Ovary (tissue), 10 donors: ENCODE measurements at regions of chr7 and their contacts with region 1.

Region 1: DNA sequence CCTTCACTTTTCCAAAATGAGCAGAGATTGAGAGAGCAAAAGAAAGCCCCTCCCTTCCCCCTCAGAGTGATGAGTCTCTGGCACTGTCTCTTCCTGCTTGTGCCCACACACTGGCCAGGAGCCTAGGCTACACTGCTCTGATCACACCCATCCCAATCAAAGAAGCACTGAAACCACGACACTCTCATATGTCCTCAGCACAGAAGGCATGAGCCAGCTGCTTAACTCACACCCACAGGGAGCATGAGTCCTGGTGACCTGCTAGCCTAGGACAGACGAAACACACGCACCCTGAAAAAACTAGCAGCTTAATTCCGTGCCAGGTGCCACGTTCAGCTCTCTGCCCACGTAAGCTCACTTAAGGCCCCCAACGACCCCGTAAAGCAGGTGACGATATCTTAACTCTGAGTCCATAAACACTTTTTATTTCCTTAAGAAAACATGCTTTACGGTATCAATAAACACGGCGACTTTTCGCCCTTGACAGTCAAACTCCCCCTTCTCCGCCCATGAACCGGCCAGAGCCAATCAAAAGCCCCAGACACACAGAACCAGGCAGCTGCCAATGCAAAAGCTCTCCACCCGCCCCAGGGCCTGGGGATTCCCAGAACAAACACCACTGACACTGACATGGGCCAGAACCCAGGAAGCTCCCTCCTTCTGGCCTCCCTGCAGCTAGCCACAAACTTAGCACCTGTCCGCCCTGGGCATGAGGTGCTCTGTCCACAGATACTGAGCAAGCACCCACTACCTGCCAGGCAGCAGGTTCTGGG is 69.0 kb downstream of the TNRC18 start:
- DNase-seq: peak; percentile 55 to 70 (median 64)
- H3K4me3 ChIP-seq: no peak overlapping the region
- H3K27ac ChIP-seq: no peak overlapping the region
- H3K4me1 ChIP-seq: peaks cover 6% of the 10 kb centered on the region
- H3K27me3 ChIP-seq: no peaks in the 10 kb centered on the region
- CTCF ChIP-seq: no peak
- EP300 ChIP-seq: no peak
- POLR2A ChIP-seq: no peak

Region 2: GRCh38 chr7:5231811-5232484 is 122.7 kb before region 1 on chr7:
- intact Hi-C with region 1: loop called in 1 of 4 experiments (anchors 10 kb)
- DNase-seq: no peak
- H3K4me3 ChIP-seq: no peak overlapping the region
- H3K27ac ChIP-seq: no peak overlapping the region
- H3K4me1 ChIP-seq: no peaks in the 10 kb centered on the region
- H3K27me3 ChIP-seq: no peaks in the 10 kb centered on the region
- CTCF ChIP-seq: no peak
- EP300 ChIP-seq: no peak
- POLR2A ChIP-seq: no peak

Region 3: DNA sequence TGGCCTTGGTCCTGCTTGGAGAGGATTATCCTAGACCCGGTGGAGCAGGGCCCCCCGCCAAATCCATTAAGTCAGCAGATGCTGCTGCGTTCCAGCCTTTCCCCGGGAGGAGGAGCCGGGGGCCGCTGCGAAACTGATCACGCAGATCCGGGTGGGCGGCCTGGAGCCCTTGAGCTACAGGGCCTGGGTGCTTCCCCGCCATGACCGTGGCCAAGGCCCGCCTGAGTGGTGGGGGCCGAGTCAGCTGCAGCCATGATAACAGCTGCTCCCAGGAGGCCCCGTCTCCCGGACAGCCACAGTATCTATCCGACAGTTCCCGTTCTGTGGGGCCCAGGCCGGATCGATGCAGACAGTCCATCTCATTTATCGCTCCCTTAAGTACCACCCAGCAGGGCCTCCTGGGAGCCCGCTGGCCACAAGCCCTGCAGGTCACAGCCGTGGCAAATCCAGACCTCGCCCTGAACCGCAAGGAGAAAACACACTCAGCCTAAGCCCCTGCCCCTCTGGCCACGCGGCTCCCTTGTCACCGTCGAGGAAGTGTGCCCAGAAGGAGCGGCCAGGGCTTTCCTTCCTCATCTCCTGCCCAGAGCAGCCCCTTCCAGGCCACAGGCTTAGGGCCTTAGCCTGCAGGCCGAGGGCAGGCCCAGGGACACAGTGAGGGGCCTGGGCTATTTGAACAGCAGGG is 106.3 kb before region 1 on chr7:
- intact Hi-C with region 1: loop called in 1 of 4 experiments (anchors 10 kb)
- DNase-seq: peak; percentile 86 to 92 (median 91)
- H3K4me3 ChIP-seq: no peak overlapping the region
- H3K27ac ChIP-seq: peak overlapping the region in 1 of 2 donors; percentile 86
- H3K4me1 ChIP-seq: no peaks in the 10 kb centered on the region
- H3K27me3 ChIP-seq: no peaks in the 10 kb centered on the region
- CTCF ChIP-seq: no peak
- EP300 ChIP-seq: no peak
- POLR2A ChIP-seq: no peak